OCI-LY7 (cell line): ENCODE measurements at regions of chr3 and their contacts with region 1.

Region 1: DNA sequence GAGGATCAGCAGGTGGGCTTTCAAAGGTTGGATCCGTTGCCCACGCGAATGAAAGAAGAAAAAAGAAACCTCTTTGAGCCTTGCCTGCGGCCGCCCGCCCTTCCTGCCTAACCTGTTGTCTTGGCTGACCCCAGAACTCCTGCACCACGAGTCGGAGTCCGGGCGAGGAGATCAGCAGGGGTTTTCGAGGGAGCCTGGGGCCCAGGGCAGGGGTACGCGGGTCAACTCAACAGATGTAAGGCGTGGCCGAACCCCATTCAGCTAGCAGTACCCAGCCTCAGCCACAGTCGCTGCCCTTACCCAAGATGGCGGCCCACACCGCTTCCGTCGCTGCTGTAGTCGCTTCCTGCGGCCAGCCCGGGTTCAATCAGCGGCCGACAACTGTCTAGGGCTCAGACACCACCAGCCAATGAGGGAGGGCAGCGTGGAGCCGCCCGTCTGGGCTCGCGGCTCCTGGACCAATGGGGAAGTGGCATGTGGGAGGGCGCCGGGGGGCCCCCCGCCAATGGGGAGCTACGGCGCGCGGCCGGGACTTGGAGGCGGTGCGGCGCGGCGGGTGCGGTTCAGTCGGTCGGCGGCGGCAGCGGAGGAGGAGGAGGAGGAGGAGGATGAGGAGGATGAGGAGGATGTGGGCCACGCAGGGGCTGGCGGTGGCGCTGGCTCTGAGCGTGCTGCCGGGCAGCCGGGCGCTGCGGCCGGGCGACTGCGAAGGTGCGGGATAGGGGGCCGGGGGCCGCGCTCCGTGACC is at the start of gene MANF:
- DNase-seq: peak; percentile 98
- H3K4me3 ChIP-seq: peak within 1 kb of the TSS; percentile 90
- H3K27ac ChIP-seq: peak within 1 kb of the TSS; percentile 67
- H3K4me1 ChIP-seq: peaks cover 46% of the 10 kb centered on the region
- CTCF ChIP-seq: no peak
- total RNA-seq, gene MANF: 104 and 122 TPM in 2 replicates

Region 2: DNA sequence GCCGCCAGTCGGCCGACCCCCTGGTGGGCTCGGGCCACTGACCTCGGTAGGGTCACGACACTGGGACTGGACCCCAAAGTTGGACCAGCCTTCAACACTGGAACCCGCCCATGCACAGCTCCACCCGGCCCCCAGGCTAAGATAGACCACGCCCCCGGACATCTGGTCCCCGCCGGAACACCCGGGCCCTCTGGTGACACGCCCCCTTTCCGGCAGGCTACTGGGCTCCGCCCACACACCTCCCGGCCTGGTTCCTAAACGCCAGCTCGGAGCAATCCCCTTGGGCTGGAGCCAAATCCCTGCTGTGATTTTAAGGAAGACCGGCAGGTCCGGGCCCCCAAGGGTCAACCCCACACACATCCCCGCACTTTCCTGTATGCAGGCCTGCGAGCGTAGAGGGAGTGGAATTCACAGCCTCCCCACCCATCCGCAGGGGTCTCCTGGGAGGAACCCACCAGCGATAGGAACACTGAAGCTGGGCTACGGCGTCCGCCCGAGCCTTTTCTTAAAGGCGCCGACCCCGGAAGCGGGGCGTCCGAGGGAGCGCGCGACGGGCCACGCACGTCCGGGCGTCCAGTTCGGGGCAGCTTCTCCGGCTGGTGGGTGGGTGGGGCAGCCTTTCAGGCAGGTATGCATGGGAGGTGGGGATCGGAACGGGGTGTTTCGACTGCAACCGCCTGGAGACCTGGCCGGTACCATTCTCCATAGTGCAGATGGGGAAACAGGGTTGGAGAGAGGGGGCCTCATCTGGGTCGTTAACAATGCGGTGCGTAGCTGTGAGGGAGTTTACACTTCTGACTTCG is 815.8 kb before region 1 on chr3 and contains the start of gene HEMK1:
- CTCF ChIA-PET with region 1: no interaction called
- POLR2A ChIA-PET with region 1: no interaction called
- intact Hi-C with region 1: loop called (anchors 2 kb)
- DNase-seq: peak; percentile 97
- H3K4me3 ChIP-seq: peak within 1 kb of the TSS; percentile 95
- H3K27ac ChIP-seq: peak within 1 kb of the TSS; percentile 55
- H3K4me1 ChIP-seq: peaks cover 25% of the 10 kb centered on the region
- CTCF ChIP-seq: no peak
- total RNA-seq, gene HEMK1: 18.9 and 19.3 TPM in 2 replicates

Region 3: GRCh38 chr3:51403675-51404074 is 18.8 kb after region 1 on chr3:
- CTCF ChIA-PET with region 1: no interaction called
- POLR2A ChIA-PET with region 1: no interaction called
- intact Hi-C with region 1: no loop called
- DNase-seq: no peak
- H3K4me3 ChIP-seq: no peak overlapping the region
- H3K27ac ChIP-seq: no peak overlapping the region
- H3K4me1 ChIP-seq: no peaks in the 10 kb centered on the region
- CTCF ChIP-seq: no peak

Region 4: DNA sequence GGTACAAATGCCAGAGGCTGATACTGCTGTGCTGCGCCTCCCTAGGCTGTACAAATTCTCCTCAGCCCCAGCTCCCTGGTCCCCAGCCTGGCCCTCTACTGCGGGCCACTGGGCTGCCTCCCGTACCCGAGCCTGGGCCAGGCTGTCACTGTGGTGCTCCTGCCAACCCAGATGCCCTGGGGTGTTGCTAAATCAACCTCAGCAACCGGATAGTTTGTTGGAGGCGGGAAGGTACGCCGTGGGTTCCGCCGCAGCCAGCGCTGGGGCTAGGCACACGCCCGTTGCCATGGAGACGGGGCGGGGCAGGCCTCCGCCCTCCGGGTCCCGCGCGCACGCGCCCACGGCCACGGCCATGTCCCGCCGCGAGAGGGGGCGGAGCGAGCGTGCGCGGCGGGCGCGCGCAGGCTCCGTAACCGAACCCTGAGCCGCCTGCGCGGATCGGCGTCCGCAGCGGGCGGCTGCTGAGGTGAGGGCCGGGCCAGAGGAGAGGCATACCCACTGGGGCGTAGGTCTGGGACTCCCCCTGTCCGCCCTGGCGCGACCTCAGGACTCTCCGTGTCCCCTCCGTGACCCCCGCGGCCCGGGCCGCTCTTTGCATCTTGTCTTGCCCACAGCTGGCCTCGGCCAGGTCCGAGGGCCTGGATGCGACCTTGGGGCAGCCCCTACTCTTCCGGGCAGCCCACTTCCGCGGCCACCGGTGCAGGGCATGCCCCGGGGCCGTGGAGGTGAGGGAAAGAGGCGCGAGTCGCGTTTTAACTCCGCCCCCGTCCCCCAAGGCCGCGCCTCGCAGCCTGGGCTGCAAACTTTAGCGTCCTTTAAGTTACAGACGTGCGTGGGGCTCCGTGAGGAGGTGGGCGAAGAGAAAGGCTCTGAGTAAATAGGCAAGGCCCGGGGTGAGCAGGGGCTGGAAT is 286.2 kb after region 1 on chr3 and contains the start of gene TEX264:
- CTCF ChIA-PET with region 1: no interaction called
- POLR2A ChIA-PET with region 1: no interaction called
- intact Hi-C with region 1: loop called (anchors 2 kb)
- DNase-seq: peak; percentile 93
- H3K4me3 ChIP-seq: peak within 1 kb of the TSS; percentile 95
- H3K27ac ChIP-seq: peak within 1 kb of the TSS; percentile 72
- H3K4me1 ChIP-seq: peaks cover 36% of the 10 kb centered on the region
- CTCF ChIP-seq: no peak
- total RNA-seq, gene TEX264: 42.4 and 50.3 TPM in 2 replicates

Region 5: GRCh38 chr3:51813539-51813938 is 428.6 kb after region 1 on chr3:
- CTCF ChIA-PET with region 1: no interaction called
- POLR2A ChIA-PET with region 1: no interaction called
- intact Hi-C with region 1: no loop called
- DNase-seq: no peak
- H3K4me3 ChIP-seq: no peak overlapping the region
- H3K27ac ChIP-seq: no peak overlapping the region
- H3K4me1 ChIP-seq: no peaks in the 10 kb centered on the region
- CTCF ChIP-seq: no peak